Activated CD4-positive, alpha-beta T cell treated with anti-CD3 and anti-CD28 coated beads for 36 hours (primary cell): ENCODE measurements at regions of chr6 and their contacts with region 1.

Region 1: DNA sequence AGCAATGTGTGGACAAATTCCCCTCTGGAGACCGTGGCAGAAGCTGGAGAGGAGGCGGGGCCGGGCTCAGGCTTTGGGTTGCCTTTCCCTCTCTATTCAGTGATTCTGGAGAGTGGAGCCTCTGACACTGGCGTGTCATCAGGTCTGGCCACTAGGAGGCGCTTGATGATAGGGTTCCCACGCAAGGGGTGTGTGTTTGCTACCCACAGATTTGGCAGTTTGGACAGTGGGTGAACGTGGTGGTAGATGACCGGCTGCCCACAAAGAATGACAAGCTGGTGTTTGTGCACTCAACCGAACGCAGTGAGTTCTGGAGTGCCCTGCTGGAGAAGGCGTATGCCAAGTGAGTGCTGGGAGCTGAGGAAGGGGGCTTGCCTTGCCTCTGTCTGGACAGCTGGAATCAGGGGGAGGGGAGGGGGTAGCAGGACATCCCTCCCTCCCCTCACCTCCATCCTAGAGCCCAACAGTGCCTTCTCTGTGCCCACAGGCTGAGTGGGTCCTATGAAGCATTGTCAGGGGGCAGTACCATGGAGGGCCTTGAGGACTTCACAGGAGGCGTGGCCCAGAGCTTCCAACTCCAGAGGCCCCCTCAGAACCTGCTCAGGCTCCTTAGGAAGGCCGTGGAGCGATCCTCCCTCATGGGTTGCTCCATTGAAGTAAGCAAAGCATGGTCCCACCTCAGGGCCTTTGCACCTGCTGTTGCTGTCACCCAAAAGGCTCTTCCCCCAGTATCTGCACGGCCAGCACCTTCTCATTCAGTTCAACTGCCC is 14.3 kb downstream of the CAPN11 start:
- DNase-seq: peak; percentile 91
- ATAC-seq: peak; percentile 72
- H3K4me3 Mint-ChIP-seq: peak overlapping the region; percentile 73
- H3K27ac Mint-ChIP-seq: peak overlapping the region; percentile 95
- H3K4me1 Mint-ChIP-seq: peaks cover 30% of the 10 kb centered on the region
- H3K27me3 Mint-ChIP-seq: no peaks in the 10 kb centered on the region

Region 2: GRCh38 chr6:44127186-44128019 is 45.5 kb before region 1 on chr6 and contains the starts of genes MRPL14 and TMEM63B:
- CTCF ChIA-PET with region 1: interaction called, 5 read pairs
- POLR2A ChIA-PET with region 1: interaction called, 4 read pairs
- intact Hi-C with region 1: loop called (anchors 1 to 5 kb)
- DNase-seq: peak; percentile 95
- ATAC-seq: peak; percentile 81
- H3K4me3 Mint-ChIP-seq: peak within 1 kb of the TSS; percentile 82
- H3K27ac Mint-ChIP-seq: peak within 1 kb of the TSS; percentile 96
- H3K4me1 Mint-ChIP-seq: peaks cover 46% of the 10 kb centered on the region
- H3K27me3 Mint-ChIP-seq: no peaks in the 10 kb centered on the region
- total RNA-seq, gene MRPL14: 29.5 to 43.3 TPM
- total RNA-seq, gene TMEM63B: 10.9 to 15.2 TPM

Region 3: DNA sequence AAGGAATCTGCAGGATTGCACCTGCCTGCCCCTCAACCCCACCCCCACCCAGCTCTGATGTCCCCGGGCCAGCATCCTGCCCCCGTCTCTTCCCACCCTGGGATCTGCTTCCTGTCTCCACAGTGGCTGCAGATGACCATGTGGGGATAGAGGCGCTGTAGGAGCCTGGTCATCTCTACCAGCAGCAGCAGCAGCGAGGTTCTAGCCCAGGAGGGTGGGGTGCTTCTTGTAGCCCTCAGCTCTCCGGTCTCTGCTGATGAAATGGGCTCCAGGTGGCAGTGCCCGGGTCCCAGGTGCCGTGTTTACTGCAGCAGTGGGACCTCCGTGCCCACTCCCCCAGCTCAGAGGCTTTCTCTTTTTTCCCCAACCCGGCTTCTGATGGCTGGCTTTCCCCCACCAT is 10.9 kb after region 1 on chr6:
- CTCF ChIA-PET with region 1: interaction called, 11 read pairs
- POLR2A ChIA-PET with region 1: no interaction called
- intact Hi-C with region 1: no loop called
- DNase-seq: no peak
- ATAC-seq: no peak
- H3K4me3 Mint-ChIP-seq: no peak overlapping the region
- H3K27ac Mint-ChIP-seq: no peak overlapping the region
- H3K4me1 Mint-ChIP-seq: peaks cover 13% of the 10 kb centered on the region
- H3K27me3 Mint-ChIP-seq: no peaks in the 10 kb centered on the region

Region 4: DNA sequence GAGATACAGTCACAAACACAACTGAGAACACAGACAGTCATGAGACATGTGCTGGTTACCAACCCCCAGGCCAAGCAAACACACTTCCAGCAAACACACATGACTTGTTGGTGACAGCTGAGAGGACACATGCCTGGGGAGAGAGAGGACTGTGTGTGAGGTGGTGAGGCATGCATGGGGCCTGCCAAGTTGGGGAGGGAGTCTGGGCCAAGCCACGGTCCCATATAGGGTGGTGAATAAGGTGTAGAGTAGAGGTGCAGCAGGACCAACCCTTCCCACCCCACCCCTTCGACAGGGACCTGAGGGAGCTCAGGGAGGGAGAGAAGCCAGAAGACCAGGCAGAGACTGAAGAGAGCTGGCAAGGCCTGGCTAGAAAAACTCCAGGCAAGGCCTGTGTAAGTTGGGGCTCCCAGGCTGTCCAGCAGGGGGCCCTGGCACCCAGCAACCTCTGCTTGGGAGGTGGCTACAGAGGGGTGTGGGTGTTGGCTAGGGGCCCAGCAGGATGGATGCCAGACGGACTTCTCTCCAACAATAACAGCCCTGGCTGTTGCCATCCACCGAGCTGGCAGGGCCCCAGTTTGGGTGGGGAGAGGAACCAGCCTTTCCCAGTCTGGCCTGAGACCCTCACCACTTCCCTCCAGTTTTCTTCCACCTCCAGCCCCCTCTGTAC is 48.5 kb after region 1 on chr6:
- CTCF ChIA-PET with region 1: interaction called, 8 read pairs
- POLR2A ChIA-PET with region 1: interaction called, 3 read pairs
- intact Hi-C with region 1: loop called (anchors 1 to 2 kb)
- DNase-seq: peak; percentile 90
- ATAC-seq: peak; percentile 70
- H3K4me3 Mint-ChIP-seq: peak overlapping the region; percentile 10
- H3K27ac Mint-ChIP-seq: peak overlapping the region; percentile 69
- H3K4me1 Mint-ChIP-seq: peaks cover 48% of the 10 kb centered on the region
- H3K27me3 Mint-ChIP-seq: peaks cover 3% of the 10 kb centered on the region

Region 5: GRCh38 chr6:44246663-44247337 is 73.9 kb after region 1 on chr6 and contains the start of gene HSP90AB1:
- CTCF ChIA-PET with region 1: interaction called, 10 read pairs
- POLR2A ChIA-PET with region 1: interaction called, 15 read pairs
- intact Hi-C with region 1: loop called in 1 of 2 experiments (anchors 1 kb)
- DNase-seq: peak; percentile 98
- ATAC-seq: peak; percentile 86
- H3K4me3 Mint-ChIP-seq: peak within 1 kb of the TSS; percentile 97
- H3K27ac Mint-ChIP-seq: peak within 1 kb of the TSS; percentile 99
- H3K4me1 Mint-ChIP-seq: peaks cover 44% of the 10 kb centered on the region
- H3K27me3 Mint-ChIP-seq: no peaks in the 10 kb centered on the region
- total RNA-seq, gene HSP90AB1: 2,120 to 2,263 TPM

Region 6: GRCh38 chr6:44257025-44257752 is 84.3 kb after region 1 on chr6 and contains the start of gene SLC35B2:
- CTCF ChIA-PET with region 1: interaction called, 16 read pairs
- POLR2A ChIA-PET with region 1: no interaction called
- intact Hi-C with region 1: loop called in 1 of 2 experiments (anchors 1 kb)
- DNase-seq: peak; percentile 81
- ATAC-seq: peak; percentile 72
- H3K4me3 Mint-ChIP-seq: peak within 1 kb of the TSS; percentile 83
- H3K27ac Mint-ChIP-seq: peak within 1 kb of the TSS; percentile 90
- H3K4me1 Mint-ChIP-seq: peaks cover 56% of the 10 kb centered on the region
- H3K27me3 Mint-ChIP-seq: no peaks in the 10 kb centered on the region
- total RNA-seq, gene SLC35B2: 14.1 TPM